ENCODE measurements at regions of chr20 and their contacts with region 1.

Region 1: GRCh38 chr20:35269055-35269781 is 8.7 kb downstream of the MMP24OS start:
- DNase-seq: peak in 1 of 2 experiments; percentile 66
- H3K4me3 ChIP-seq: no peak overlapping the region
- H3K27ac ChIP-seq: no peak overlapping the region
- H3K4me1 ChIP-seq: peaks cover under 1% of the 10 kb centered on the region
- H3K27me3 ChIP-seq: no peaks in the 10 kb centered on the region
- CTCF ChIP-seq: peak; percentile 84

Region 2: DNA sequence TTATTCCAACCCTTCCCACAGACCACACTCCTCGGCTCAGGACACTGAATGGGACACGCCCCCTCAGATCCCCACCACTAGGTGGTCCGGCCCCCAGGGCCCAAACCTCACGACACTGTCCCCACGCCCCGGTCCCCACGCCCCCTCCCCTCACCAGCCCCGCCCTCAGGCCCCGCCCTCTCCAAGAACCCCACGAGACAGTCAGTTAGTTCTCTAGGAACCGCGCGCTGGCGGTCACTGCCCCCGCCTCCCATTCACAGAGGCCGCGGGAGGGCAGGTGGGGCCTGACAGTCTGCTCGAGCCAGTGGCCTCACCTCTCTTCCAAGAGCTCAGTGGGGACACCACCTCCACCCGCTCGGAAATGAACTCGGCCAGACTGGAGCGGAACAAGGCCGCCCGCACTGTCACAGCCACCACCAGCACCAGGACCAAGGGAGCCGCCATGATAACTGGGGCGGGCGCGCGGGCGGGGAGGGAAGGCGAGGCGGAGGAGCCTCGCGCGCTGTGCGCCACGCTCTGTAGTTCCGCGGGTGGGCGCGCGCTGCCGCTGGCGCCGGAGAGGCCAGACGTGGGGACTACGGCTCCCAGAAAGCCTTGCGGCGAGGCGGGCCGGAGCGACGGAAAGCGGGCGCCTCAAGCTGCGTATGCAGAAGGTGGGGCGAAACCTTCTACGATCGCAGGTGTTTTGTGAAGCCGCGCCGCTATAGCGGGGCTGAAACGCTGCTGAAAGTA is 592.4 kb before region 1 on chr20 and contains the start of gene PIGU:
- CTCF ChIA-PET with region 1: no interaction called
- POLR2A ChIA-PET with region 1: interaction called, 14 read pairs
- intact Hi-C with region 1: no loop called
- DNase-seq: peak; percentile 83 to 98
- H3K4me3 ChIP-seq: peak within 1 kb of the TSS; percentile 68
- H3K27ac ChIP-seq: peak within 1 kb of the TSS; percentile 74
- H3K4me1 ChIP-seq: peaks cover 22% of the 10 kb centered on the region
- H3K27me3 ChIP-seq: no peaks in the 10 kb centered on the region
- CTCF ChIP-seq: no peak
- total RNA-seq, gene PIGU: 20.9 and 25.0 TPM in 2 replicates

Region 3: DNA sequence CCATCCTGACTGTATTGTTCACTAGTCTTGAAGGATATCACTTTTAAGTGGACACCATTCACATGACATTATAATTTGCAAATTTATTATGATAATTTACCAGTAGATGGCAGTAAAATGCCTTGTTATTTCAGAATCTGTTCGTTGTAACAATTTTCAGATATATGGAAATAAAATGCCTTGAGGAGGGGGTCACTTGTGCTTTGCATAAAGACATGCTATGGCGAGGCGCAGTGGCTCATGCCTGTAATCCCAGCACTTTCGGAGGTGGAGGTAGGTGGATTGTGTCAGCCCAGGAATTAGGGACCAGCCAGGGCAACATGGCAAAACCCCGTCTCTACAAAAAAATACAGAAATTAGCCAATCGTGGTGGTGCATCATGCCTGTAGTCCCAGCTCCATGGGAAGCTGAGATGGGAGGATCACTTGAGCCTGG is 434.7 kb before region 1 on chr20:
- CTCF ChIA-PET with region 1: interaction called, 4 read pairs
- POLR2A ChIA-PET with region 1: no interaction called
- intact Hi-C with region 1: loop called (anchors 2 kb)
- DNase-seq: peak; percentile 10 to 52
- H3K4me3 ChIP-seq: no peak overlapping the region
- H3K27ac ChIP-seq: no peak overlapping the region
- H3K4me1 ChIP-seq: no peaks in the 10 kb centered on the region
- H3K27me3 ChIP-seq: no peaks in the 10 kb centered on the region
- CTCF ChIP-seq: peak; percentile 72

Region 4: GRCh38 chr20:34861386-34862084 is 407.7 kb before region 1 on chr20:
- CTCF ChIA-PET with region 1: no interaction called
- POLR2A ChIA-PET with region 1: interaction called, 16 read pairs
- intact Hi-C with region 1: no loop called
- DNase-seq: peak; percentile 76 to 88
- H3K4me3 ChIP-seq: no peak overlapping the region
- H3K27ac ChIP-seq: no peak overlapping the region
- H3K4me1 ChIP-seq: peaks cover 21% of the 10 kb centered on the region
- H3K27me3 ChIP-seq: no peaks in the 10 kb centered on the region
- CTCF ChIP-seq: no peak

Region 5: DNA sequence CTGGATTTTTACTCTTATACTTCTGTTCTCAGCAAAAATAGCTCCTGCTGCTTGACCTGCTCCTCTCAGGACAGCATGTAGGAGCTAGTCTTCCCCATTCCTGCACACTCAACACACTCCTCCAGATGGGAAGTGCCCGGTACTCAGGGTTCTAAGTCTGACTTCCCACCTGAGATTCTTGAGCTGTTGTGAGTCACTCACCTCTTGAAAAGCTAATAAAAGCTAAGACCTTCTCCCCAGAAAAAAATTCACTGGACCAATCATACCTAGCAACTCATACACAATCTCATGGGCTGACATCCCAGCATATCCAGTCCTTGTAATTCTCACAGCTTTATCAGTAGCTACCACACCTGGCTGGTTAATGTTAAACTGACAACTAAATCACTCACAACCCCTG is 230.1 kb before region 1 on chr20:
- CTCF ChIA-PET with region 1: interaction called, 11 read pairs
- POLR2A ChIA-PET with region 1: no interaction called
- intact Hi-C with region 1: no loop called
- DNase-seq: peak in 1 of 2 experiments; percentile 76
- H3K4me3 ChIP-seq: no peak overlapping the region
- H3K27ac ChIP-seq: peak overlapping the region; percentile 14
- H3K4me1 ChIP-seq: peaks cover 12% of the 10 kb centered on the region
- H3K27me3 ChIP-seq: no peaks in the 10 kb centered on the region
- CTCF ChIP-seq: no peak

Region 6: GRCh38 chr20:35120012-35120701 is 149.1 kb before region 1 on chr20:
- CTCF ChIA-PET with region 1: no interaction called
- POLR2A ChIA-PET with region 1: no interaction called
- intact Hi-C with region 1: no loop called
- DNase-seq: peak in 1 of 2 experiments; percentile 66
- H3K4me3 ChIP-seq: no peak overlapping the region
- H3K27ac ChIP-seq: no peak overlapping the region
- H3K4me1 ChIP-seq: 0 out of 2 replicates have a peak, but pooled peaks cover 8% of the 10 kb centered on the region
- H3K27me3 ChIP-seq: no peaks in the 10 kb centered on the region
- CTCF ChIP-seq: no peak

Region 7: GRCh38 chr20:35146920-35147574 is 122.2 kb before region 1 on chr20 and contains the start of gene EDEM2:
- CTCF ChIA-PET with region 1: interaction called, 10 read pairs
- POLR2A ChIA-PET with region 1: interaction called, 25 read pairs
- intact Hi-C with region 1: loop called (anchors 1 kb)
- DNase-seq: peak; percentile 89 to 96
- H3K4me3 ChIP-seq: peak within 1 kb of the TSS; percentile 93
- H3K27ac ChIP-seq: peak within 1 kb of the TSS; percentile 94
- H3K4me1 ChIP-seq: peaks cover 14% of the 10 kb centered on the region
- H3K27me3 ChIP-seq: no peaks in the 10 kb centered on the region
- CTCF ChIP-seq: no peak
- total RNA-seq, gene EDEM2: 28.6 and 34.9 TPM in 2 replicates

Region 8: GRCh38 chr20:35215066-35215956 is 53.9 kb before region 1 on chr20:
- CTCF ChIA-PET with region 1: interaction called, 11 read pairs
- POLR2A ChIA-PET with region 1: no interaction called
- intact Hi-C with region 1: no loop called
- DNase-seq: peak; percentile 52 to 98
- H3K4me3 ChIP-seq: no peak overlapping the region
- H3K27ac ChIP-seq: peak overlapping the region; percentile 94
- H3K4me1 ChIP-seq: peaks cover 28% of the 10 kb centered on the region
- H3K27me3 ChIP-seq: no peaks in the 10 kb centered on the region
- CTCF ChIP-seq: no peak

Measured in PC-9 (cell line).